HEK293T (cell line): ENCODE measurements at regions of chr14 and their contacts with region 1.

Region 1: DNA sequence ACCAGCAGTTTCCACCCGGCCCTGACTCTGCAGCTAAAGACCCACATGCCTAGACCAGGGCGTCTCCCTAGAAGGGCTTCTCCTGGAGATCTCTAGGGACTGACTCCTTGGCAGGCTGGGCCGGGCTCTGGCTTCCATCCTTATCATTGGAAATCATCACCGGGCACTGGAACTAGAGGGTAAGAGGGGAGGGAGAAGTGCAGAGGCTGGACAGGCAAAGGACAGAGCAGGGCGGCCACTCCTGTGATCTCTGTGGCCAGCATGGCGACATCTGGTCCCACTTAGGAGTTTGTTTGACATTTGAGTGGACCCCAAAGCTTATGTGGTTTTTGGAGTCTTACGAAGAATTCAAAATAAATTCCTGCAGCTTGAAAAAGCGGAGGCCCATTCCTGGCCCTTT is 7.1 kb downstream of the LTBP2 start:
- DNase-seq: no peak

Region 2: GRCh38 chr14:74442757-74443156 is 162.2 kb before region 1 on chr14:
- CTCF ChIA-PET with region 1: interaction called, 10 read pairs
- POLR2A ChIA-PET with region 1: no interaction called
- DNase-seq: no peak

Region 3: DNA sequence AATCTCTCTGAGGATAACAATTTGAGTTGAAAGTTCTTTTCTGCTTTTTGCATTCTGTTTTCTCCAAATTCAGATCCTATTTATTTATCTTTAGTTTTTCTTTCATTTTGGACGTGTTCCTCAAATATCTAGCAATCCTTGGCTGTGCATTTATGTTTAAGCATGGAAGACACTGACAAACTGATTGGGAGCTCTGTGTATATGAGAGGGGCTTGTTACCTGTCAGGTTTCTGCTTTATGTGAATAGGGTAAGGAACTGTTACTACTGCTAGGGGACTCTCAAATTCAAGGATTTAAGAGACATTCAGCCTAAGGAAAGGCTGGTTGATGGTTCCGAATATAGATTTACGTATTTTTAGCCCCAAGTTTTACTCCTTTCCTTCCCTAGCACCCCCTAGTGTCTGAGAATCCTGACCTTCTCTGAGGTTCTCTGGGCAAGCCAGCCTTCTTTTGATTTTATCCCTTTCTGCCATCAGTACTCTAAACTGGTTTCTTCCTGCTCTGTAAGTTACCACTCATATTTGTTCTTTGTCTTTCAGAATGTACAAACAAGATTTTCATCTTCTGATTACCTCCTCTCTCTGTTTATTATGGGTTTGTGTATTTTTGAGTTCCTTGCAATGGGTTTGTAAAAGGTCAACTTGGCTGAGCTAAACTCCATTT is 188.7 kb after region 1 on chr14:
- CTCF ChIA-PET with region 1: no interaction called
- POLR2A ChIA-PET with region 1: no interaction called
- DNase-seq: no peak